BJ (cell line): ENCODE measurements at regions of chr9 and their contacts with region 1.

Region 1: DNA sequence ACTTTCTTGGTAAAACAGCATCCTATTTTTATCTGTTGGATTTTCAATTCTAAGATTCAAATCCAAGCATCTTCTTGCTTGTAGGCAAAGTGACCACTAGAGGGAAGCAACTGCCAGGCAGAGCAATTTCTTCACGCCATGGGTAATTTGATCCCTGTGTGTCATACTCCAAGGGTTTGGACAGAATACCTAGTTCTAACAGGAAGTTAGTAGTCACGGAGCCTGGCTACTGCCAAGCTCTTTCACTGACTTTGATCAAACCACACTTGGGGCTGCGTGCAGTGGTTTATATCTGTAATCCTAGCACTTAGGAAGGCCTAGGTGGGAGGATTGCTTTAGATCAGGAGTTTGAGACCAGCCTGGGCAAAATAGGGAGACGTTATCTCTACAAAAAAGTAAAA is 473.6 kb upstream of the TNC start:
- DNase-seq: peak; percentile 96
- H3K4me3 ChIP-seq: no peak overlapping the region
- H3K27me3 ChIP-seq: no peaks in the 10 kb centered on the region
- CTCF ChIP-seq: peak; percentile 91

Region 2: DNA sequence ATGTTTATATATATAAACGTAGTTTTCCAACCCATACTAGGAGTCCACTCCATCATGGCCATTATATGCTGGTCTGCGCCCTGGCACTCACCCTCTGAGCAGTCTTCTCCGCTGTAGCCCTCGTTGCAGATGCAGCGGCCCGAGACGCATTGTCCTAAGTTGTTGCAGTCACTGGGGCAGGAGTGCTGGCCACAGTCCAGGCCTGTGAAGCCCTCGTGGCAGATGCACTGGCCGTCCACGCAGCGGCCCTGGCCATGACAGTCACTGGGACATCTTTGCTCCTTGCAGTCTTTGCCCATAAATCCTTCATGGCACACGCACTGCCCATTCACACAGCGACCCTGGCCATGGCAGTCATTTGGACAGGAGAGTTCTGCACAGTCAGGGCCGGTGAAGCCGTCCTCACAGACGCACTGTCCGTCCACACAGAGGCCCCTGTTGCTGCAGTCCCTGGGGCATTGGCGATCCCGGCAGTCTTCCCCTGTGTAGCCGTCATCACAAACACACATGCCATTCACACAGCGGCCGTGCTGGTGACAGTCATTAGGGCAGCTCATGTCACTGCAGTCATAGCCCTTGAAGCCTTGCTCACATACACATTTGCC is 505.7 kb before region 1 on chr9:
- CTCF ChIA-PET with region 1: no interaction called
- POLR2A ChIA-PET with region 1: no interaction called
- DNase-seq: no peak
- H3K4me3 ChIP-seq: no peak overlapping the region
- H3K27me3 ChIP-seq: no peaks in the 10 kb centered on the region
- CTCF ChIP-seq: no peak

Region 3: GRCh38 chr9:115540091-115540490 is 51.5 kb before region 1 on chr9:
- CTCF ChIA-PET with region 1: no interaction called
- POLR2A ChIA-PET with region 1: no interaction called
- DNase-seq: no peak
- H3K4me3 ChIP-seq: no peak overlapping the region
- H3K27me3 ChIP-seq: no peaks in the 10 kb centered on the region
- CTCF ChIP-seq: no peak

Region 4: DNA sequence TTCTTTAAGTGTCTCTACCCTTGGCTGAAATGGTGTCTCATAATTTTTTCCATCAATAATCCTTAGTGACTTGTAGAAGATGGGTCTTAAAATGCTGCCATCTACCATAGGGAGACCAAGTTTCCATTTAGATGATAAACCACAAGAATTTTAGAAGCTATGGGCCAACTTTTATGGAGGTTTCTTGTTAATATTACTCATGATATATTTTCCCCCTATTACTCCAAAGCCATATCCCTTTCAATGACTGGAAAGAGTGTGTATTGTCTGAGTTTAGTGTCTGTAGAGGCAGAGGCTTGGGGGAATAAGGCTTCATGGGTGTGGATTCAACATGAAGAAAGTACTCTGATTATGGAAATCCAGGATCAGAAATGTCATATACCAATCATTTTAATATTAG is 33.7 kb after region 1 on chr9:
- CTCF ChIA-PET with region 1: no interaction called
- POLR2A ChIA-PET with region 1: no interaction called
- DNase-seq: no peak
- H3K4me3 ChIP-seq: no peak overlapping the region
- H3K27me3 ChIP-seq: no peaks in the 10 kb centered on the region
- CTCF ChIP-seq: no peak

Region 5: GRCh38 chr9:115672477-115673316 is 81.1 kb after region 1 on chr9:
- CTCF ChIA-PET with region 1: interaction called, 10 read pairs
- POLR2A ChIA-PET with region 1: no interaction called
- DNase-seq: peak; percentile 94
- H3K4me3 ChIP-seq: no peak overlapping the region
- H3K27me3 ChIP-seq: no peaks in the 10 kb centered on the region
- CTCF ChIP-seq: no peak

Region 6: DNA sequence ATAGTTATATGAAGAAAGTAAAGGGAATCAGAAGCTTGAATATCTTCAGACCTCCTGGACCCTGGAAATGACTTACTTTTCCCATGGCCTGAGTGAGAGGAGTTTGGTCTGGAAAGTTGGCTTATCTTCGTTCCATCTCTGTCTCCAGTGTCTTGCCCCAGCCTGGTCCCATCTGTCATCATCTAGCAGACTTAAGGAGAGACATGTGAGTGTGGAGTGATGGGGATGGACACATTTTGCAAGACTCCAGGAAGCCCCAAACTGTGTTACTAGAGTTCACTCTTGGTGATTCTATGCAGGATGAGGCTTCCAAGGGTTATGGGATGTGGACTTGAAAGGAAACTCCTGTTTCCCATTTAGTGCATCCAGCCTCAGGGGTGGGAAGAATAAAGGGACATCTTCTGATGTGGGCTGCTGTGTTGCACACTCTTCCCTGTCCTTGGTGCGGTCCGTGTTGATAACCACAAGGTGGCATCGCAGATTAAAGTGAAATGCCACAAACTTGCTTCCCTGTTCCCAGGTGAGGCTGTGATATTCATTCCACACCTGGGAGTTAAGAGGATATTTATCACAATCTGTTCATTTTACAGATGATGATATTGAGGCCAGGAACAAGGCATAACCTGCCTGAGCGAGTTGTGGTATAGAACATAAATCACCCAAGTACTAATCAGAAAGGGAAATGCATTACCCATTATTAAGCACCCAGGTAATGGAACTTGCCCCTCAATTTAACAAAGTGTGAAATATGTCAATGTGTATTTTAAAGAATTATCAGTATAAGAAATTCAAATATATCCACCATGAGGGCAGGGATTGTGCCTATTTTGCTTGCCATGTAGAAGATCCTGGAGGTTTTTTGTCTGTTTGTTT is 292.1 kb after region 1 on chr9:
- CTCF ChIA-PET with region 1: interaction called, 15 read pairs
- POLR2A ChIA-PET with region 1: interaction called, 3 read pairs
- DNase-seq: no peak
- H3K4me3 ChIP-seq: no peak overlapping the region
- H3K27me3 ChIP-seq: no peaks in the 10 kb centered on the region
- CTCF ChIP-seq: peak; percentile 72

Region 7: DNA sequence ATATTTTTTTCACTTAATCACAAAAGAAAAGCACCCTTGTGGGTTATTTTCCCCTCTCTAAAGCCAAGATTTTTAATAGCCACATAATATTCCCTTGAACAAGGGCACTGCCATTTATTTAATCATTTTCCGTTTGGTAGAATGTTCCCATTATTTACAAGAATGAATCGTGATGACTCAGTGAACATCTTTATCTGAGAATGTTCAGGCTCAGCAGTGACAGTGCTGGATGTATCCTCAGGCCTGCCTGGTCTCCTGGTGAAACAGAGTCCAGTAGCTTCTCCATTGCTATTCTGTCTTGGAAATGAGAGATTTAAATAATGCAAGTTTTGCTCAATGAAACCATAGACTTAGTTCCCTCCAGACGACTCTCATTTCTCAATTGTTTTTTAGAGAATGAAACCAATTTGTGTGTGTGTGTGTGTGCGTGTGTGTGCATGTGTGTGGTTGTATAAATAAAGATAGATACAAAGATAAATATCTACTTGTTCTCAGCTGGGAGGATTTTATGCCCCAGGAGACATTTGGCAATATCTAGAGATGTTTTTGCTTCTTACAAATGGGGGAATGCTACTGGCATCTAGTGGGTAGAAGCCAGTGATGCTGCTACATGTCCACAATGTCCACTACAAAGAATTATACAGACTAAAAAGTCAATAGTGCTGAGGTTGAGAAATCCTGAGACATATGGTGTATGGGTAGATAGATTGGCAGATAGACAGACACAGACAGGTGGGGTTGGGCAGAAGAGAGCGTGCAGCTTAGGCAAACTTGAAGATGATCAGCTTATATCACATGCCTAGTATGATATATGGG is 617.0 kb after region 1 on chr9:
- CTCF ChIA-PET with region 1: interaction called, 10 read pairs
- POLR2A ChIA-PET with region 1: no interaction called
- DNase-seq: no peak
- H3K4me3 ChIP-seq: no peak overlapping the region
- H3K27me3 ChIP-seq: no peaks in the 10 kb centered on the region
- CTCF ChIP-seq: peak; percentile 46

Region 8: DNA sequence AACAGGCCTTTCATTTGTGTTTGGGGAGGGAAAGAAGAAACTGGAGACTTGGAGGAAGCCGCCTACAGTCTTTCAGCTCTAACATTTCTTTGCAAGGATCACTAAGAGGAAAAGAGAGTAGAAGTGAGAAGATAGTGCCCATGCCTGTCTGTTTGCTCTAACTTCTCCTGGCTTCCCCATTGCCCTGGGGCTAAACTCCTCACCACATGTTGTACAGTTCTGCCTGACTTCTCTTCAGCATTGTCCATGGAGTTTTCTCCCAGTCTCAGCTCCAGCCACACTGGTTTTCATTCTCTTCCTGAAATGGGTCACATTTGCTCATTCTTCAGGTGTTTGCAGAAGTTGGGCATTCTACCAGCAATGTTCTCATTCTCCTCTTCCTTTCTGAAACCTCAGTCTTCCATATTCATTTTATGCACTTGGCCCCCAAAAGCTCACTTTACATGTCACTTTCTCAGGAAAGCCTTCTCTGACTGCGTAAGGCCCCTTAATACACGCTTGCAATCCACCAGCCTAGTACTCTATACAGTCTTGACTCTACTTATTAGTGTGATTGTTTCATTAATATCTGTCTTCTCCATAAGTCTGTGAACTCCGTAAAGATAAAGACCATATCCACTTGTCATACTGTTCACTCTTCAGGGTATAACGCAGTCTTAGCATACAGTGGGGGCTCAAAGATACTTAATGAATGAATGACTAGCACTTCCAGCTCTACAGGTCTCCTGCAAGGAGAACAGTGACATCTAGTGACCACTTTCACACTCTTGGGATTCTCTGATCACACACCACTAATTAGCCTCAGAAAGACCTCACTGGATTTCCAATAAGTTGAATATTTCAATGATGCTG is 1055.3 kb after region 1 on chr9:
- CTCF ChIA-PET with region 1: interaction called, 60 read pairs
- POLR2A ChIA-PET with region 1: no interaction called
- DNase-seq: no peak
- H3K4me3 ChIP-seq: no peak overlapping the region
- H3K27me3 ChIP-seq: no peaks in the 10 kb centered on the region
- CTCF ChIP-seq: peak; percentile 73

Region 9: DNA sequence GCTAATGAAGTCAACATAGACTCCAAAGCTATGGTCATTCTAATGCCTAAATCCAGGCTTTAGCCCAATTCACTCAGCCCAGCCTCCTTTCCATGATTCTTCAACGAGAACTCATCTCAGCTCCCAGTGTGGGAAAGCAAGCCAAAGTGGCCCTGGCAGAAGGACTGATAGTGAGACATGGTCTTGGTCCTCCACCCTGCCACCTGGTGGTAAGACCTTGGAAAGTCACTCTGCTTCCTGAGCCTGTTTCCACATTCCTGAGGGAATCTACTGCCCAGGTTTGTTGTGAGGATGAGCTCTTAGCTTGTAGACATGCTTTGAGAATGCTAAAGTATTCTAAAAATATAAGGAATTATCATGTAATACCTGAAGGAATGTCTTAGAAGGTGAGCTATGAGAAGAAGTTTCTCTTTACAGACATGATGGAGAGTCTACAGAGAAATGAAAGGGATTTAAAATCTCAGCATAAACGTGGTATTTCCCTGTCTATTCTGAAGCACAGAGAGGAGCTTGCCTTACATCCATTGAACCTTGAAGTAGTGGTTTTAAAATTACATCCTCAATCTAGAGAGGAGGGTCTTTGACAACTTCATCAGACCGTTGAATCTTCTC is 1269.0 kb after region 1 on chr9:
- CTCF ChIA-PET with region 1: interaction called, 11 read pairs
- POLR2A ChIA-PET with region 1: no interaction called
- DNase-seq: peak; percentile 4
- H3K4me3 ChIP-seq: no peak overlapping the region
- H3K27me3 ChIP-seq: no peaks in the 10 kb centered on the region
- CTCF ChIP-seq: peak; percentile 87